OCI-LY7 (cell line): ENCODE measurements at regions of chr3 and their contacts with region 1.

Region 1: DNA sequence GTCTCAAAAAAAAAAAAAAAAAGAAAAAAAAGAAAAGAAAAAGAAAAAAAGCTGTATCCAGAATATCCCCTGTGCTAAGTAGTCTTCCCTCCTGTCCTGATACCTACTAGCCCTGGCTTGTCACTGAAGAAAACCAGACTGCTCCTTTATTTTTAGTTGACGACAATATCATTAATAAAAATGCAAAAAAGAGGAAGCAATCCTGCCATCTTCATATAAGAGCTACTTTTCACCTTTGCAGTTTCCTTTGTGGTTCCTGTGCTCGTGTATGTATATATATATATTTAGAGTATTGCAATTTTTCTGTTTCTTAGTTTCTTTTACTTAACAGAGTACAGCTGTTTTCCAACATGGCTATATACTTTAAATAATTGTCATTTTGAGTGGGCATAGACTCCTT is 13.6 kb downstream of the C3orf20 start:
- DNase-seq: peak; percentile 77
- H3K4me3 ChIP-seq: peak overlapping the region; percentile 55
- H3K27ac ChIP-seq: peak overlapping the region; percentile 91
- H3K4me1 ChIP-seq: peaks cover 77% of the 10 kb centered on the region
- CTCF ChIP-seq: no peak

Region 2: DNA sequence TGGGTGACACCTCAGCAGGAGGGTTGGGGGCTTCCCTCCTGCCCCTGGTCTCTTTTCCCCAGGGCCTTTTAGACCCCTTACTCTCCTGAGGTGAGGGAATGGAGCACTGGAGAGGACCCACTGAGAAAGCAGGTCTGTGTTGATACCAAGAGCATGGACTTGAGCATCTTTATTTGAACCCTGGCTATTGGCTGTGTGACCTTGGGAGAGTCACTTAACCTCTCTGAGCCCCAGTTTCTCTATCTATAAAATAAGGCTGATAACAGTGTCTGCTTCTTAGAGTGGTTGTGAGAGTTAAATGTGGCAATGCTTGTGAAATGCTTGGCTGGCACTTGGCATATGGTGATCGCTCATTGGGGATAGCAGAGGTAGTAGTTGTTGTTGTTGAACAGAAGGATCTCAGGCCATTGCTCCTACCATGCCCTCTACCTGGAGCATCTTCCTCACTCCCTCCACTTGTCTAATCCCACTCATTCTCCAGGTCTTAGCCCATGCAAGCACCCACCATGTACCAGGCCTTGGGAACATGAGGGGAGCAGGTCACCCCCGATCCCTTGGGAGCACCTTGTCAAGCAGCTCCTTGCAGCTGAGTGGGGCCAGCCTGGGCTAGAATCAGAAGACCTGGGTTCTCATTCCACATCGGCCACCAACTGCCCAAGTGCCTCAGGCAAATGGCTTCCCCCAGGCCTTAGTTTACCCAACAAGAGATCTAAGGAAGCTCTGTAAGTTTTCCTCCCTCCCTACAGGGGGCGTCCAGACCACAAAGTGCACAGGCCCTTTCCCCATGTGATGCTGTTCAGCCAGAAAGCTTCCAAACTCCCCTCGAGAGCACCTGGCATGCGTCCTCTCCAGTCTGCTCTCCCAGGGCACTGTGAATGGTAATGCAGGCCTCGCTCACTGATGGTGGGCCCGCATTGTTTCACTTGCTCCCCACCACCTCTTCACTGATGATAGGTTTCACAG is 413.2 kb before region 1 on chr3:
- CTCF ChIA-PET with region 1: no interaction called
- POLR2A ChIA-PET with region 1: no interaction called
- intact Hi-C with region 1: no loop called
- DNase-seq: peak; percentile 69
- H3K4me3 ChIP-seq: no peak overlapping the region
- H3K27ac ChIP-seq: no peak overlapping the region
- H3K4me1 ChIP-seq: peaks cover 16% of the 10 kb centered on the region
- CTCF ChIP-seq: peak; percentile 80

Region 3: DNA sequence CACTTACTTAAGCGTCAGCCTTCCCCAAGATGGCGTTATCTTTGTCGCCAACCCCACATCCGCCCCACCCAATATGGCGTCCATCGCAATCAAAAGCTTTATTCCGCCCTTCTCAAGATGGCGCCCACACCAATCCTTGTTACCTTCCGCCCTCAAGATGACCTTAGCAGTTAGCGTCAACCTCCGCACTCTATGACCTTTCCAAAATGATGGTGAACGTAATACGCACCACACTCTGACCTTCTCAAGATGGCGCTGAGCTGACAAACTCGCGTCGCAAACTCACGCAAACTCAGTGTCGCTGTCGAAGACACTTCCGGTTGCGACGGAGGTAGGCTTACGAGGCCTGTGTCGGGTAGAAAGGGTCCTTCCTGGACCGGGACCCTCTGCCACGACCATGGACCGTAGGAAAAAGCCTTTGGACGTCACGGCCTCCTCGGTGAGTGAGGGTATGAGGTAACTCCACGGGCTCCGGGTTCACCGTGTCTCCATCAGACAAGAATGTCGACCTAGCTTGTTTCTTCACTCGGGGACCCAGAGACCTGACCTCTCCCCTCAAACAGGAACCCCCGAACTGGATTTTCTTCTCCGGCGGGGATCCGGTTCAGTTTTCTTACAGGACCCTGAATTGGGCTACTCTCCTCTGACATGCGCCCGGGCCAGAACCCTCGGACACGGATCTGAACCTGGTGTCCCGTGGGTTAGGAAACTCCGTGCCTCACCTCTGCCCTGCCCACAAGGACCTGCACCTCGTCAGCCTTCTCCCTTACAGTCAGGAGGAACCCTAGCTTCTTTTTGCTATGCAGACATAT is 36.9 kb before region 1 on chr3 and contains the start of gene CCDC174:
- CTCF ChIA-PET with region 1: no interaction called
- POLR2A ChIA-PET with region 1: interaction called, 14 read pairs
- intact Hi-C with region 1: loop called (anchors 2 kb)
- DNase-seq: peak; percentile 100
- H3K4me3 ChIP-seq: peak within 1 kb of the TSS; percentile 92
- H3K27ac ChIP-seq: peak within 1 kb of the TSS; percentile 29
- H3K4me1 ChIP-seq: peaks cover 21% of the 10 kb centered on the region
- CTCF ChIP-seq: no peak
- total RNA-seq, gene CCDC174: 11.2 and 34.9 TPM in 2 replicates

Region 4: GRCh38 chr3:14678015-14678503 is 10.5 kb before region 1 on chr3:
- CTCF ChIA-PET with region 1: interaction called, 6 read pairs
- POLR2A ChIA-PET with region 1: interaction called, 13 read pairs
- intact Hi-C with region 1: no loop called
- DNase-seq: no peak
- H3K4me3 ChIP-seq: no peak overlapping the region
- H3K27ac ChIP-seq: no peak overlapping the region
- H3K4me1 ChIP-seq: peaks cover 9% of the 10 kb centered on the region
- CTCF ChIP-seq: no peak

Region 5: DNA sequence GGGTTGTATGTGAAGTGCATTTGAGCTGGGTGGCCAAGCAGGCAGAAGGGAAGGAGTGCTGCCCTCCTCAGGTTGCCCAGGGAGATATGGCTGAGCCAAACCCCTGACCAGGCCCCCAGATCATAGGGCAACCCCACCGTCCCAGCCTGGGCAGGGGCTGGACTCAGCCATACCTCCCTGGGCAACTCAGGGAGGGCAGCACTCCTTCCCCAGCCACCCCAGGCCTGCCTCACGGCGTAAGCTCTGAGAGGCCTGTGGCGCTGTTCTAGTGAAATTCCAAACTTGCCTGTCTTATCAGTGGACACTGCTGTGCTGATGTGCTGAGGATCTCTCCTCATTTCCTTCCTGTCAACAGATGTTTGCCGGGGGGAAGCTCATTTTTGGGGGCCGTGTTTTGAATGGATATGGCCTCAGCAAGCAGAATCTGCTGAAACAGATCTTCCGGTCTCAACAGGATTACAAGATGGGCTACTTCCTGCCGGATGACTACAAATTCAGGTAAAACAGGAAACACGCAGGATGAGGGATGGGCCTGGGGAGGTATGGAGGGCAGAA is 72.7 kb after region 1 on chr3:
- CTCF ChIA-PET with region 1: interaction called, 3 read pairs
- POLR2A ChIA-PET with region 1: interaction called, 4 read pairs
- intact Hi-C with region 1: loop called (anchors 5 kb)
- DNase-seq: peak; percentile 10
- H3K4me3 ChIP-seq: no peak overlapping the region
- H3K27ac ChIP-seq: no peak overlapping the region
- H3K4me1 ChIP-seq: peaks cover 13% of the 10 kb centered on the region
- CTCF ChIP-seq: peak; percentile 33; the same call in 1 of the 2 replicates

Region 6: DNA sequence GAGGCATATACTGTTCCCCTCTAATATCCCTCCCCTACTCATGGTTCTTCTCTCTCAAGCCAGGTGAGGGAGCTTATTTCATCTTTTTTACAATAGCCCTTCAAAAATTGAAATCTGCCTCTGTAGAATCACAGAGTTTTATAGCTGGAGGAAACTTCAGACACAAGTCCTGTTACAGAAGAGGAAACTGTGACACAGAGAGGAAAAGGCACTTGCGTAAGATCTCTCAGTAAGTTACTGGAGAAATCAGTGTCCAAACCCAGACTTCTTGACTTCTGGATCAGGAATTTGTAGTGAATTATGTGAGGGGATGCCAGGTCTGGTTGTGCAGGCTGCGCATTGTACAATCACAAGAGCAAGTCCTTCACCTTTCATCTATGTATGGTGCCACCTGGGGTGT is 134.9 kb after region 1 on chr3:
- CTCF ChIA-PET with region 1: no interaction called
- POLR2A ChIA-PET with region 1: no interaction called
- intact Hi-C with region 1: no loop called
- DNase-seq: no peak
- H3K4me3 ChIP-seq: no peak overlapping the region
- H3K27ac ChIP-seq: no peak overlapping the region
- H3K4me1 ChIP-seq: no peaks in the 10 kb centered on the region
- CTCF ChIP-seq: no peak

Region 7: DNA sequence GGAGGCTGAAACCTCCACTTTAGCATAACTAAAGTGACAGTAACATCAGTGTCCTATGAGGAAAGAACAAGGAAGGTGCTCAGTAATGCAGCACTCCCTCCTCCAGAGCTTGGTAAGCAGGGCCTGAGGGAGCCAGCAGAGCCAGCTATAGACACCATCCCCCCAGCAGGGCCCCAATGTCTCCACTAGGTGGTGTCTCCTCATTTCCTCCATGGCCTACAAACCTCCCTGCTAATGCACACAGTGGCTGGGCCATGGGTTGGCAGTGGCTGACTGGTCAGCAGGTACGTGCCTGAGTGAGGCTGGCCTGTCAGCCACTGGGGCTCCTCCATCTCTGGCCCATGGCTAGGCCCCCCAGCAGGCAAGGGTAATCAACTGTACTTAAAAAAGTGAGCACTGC is 363.0 kb after region 1 on chr3:
- CTCF ChIA-PET with region 1: no interaction called
- POLR2A ChIA-PET with region 1: interaction called, 3 read pairs
- intact Hi-C with region 1: loop called (anchors 10 kb)
- DNase-seq: peak; percentile 78
- H3K4me3 ChIP-seq: peak overlapping the region; percentile 22
- H3K27ac ChIP-seq: peak overlapping the region; percentile 93
- H3K4me1 ChIP-seq: peaks cover 77% of the 10 kb centered on the region
- CTCF ChIP-seq: peak; percentile 86

Region 8: GRCh38 chr3:16378920-16379319 is 1690.4 kb after region 1 on chr3:
- CTCF ChIA-PET with region 1: no interaction called
- POLR2A ChIA-PET with region 1: no interaction called
- intact Hi-C with region 1: loop called (anchors 10 kb)
- DNase-seq: no peak
- H3K4me3 ChIP-seq: peak overlapping the region; percentile 4
- H3K27ac ChIP-seq: peak overlapping the region; percentile 99
- H3K4me1 ChIP-seq: peaks cover 96% of the 10 kb centered on the region
- CTCF ChIP-seq: no peak